IMR-90 (cell line): ENCODE measurements at regions of chr11 and their contacts with region 1.

Region 1: DNA sequence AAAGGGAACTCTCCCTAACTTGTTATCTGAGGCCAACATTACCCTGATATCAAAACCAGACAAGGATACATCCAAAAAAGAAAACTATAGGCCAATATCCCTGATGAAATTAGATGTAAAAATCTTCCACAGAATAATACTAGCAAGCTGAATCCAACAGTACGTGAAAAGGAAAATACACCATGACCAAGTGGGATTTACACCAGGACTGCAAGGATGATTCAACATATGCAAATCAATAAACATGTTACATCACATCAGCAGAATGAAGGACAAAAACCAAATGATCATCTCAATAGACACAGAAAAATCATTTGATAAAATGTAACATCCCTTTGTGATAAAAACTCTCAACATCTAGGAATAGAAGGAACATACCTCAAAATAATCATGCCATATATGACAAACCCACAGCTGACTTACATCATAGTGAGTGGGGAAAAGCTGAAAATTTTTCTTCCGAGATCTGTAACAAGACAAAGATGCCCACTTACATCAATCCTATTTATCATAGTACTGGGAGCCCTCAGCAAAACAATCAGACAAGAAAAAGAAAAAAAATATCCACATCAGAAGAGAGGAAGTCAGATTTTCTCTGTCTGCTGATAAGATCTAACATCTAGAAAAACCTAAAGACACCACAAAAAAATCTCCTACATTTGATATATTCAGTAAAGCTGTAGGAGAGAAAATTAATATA is 703.3 kb upstream of the ANO5 start:
- DNase-seq: no peak
- ATAC-seq: no peak
- H3K4me3 ChIP-seq: no peak overlapping the region
- H3K27ac ChIP-seq: no peak overlapping the region
- H3K4me1 ChIP-seq: no peaks in the 10 kb centered on the region
- H3K27me3 ChIP-seq: no peaks in the 10 kb centered on the region
- CTCF ChIP-seq: no peak
- POLR2A ChIP-seq: no peak
- RAD21 ChIP-seq: no peak

Region 2: GRCh38 chr11:21511835-21512440 is 22.4 kb after region 1 on chr11:
- CTCF ChIA-PET with region 1: interaction called, 13 read pairs
- POLR2A ChIA-PET with region 1: no interaction called
- dilution Hi-C with region 1: no loop called
- in situ Hi-C with region 1: no loop called
- intact Hi-C with region 1: no loop called
- DNase-seq: no peak
- ATAC-seq: no peak
- H3K4me3 ChIP-seq: no peak overlapping the region
- H3K27ac ChIP-seq: no peak overlapping the region
- H3K4me1 ChIP-seq: no peaks in the 10 kb centered on the region
- H3K27me3 ChIP-seq: no peaks in the 10 kb centered on the region
- CTCF ChIP-seq: 0 out of 2 replicates have a peak, but pooled peaks have one; percentile 5
- POLR2A ChIP-seq: no peak
- RAD21 ChIP-seq: no peak

Region 3: DNA sequence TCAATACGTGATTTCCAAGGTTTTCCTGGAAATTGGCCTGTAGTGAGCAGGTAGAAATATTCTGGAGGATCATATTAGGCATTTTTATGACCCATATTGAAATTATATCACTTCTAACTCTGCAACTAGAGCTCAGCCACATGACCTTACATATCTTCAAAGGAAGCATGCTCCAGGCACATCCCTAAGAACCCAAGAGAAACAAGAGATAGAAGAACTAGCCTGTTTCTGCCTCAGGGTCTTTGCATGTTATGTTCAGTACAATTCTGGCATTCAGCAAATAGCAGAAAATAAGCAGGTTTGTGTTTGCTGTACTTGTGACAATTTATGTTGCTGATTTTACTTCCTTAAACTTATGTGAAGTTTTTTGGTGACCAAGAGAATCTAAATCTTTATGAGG is 39.6 kb after region 1 on chr11:
- CTCF ChIA-PET with region 1: no interaction called
- POLR2A ChIA-PET with region 1: no interaction called
- dilution Hi-C with region 1: no loop called
- in situ Hi-C with region 1: no loop called
- intact Hi-C with region 1: no loop called
- DNase-seq: no peak
- ATAC-seq: no peak
- H3K4me3 ChIP-seq: no peak overlapping the region
- H3K27ac ChIP-seq: no peak overlapping the region
- H3K4me1 ChIP-seq: no peaks in the 10 kb centered on the region
- H3K27me3 ChIP-seq: no peaks in the 10 kb centered on the region
- CTCF ChIP-seq: no peak
- POLR2A ChIP-seq: no peak
- RAD21 ChIP-seq: no peak